ENCODE measurements at regions of chr2 and their contacts with region 1.

Region 1: GRCh38 chr2:84925724-84926376 is 20.4 kb downstream of the TMSB10 start:
- DNase-seq: peak; percentile 94 to 100
- ATAC-seq: peak; percentile 88 to 89
- H3K4me3 ChIP-seq: peak overlapping the region; percentile 64
- H3K27ac ChIP-seq: peak overlapping the region; percentile 91 to 93
- H3K4me1 ChIP-seq: peaks cover 29% of the 10 kb centered on the region
- CTCF ChIP-seq: peak; percentile 100
- EP300 ChIP-seq: no peak
- POLR2A ChIP-seq: peak; percentile 42
- RAD21 ChIP-seq: peak; percentile 92 to 99

Region 2: DNA sequence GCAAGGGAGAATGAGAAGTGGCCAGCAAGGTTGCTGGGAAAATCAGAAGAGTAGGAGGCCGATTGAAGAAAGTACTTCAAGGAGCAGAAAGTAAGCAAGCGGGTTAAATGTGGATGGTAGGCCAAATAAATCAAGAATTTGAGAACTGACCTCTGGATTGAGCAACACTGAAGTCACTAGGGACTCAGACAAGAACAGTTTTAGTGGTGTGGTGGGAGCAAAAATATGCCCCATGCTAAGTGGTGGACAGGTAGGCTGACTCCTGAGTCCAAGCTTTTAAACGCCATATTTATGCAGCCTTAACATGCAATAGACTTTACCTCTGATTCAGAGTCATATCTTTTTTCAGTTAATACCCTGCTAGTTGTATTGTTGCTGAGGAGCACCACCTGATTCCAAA is 49.5 kb before region 1 on chr2:
- CTCF ChIA-PET with region 1: interaction called, 26 read pairs
- POLR2A ChIA-PET with region 1: interaction called, 10 read pairs
- DNase-seq: no peak
- ATAC-seq: no peak
- H3K4me3 ChIP-seq: no peak overlapping the region
- H3K27ac ChIP-seq: no peak overlapping the region
- H3K4me1 ChIP-seq: no peaks in the 10 kb centered on the region
- CTCF ChIP-seq: no peak
- EP300 ChIP-seq: no peak
- POLR2A ChIP-seq: no peak
- RAD21 ChIP-seq: no peak

Region 3: GRCh38 chr2:84894758-84895520 is 30.9 kb before region 1 on chr2:
- CTCF ChIA-PET with region 1: interaction called, 178 read pairs
- POLR2A ChIA-PET with region 1: interaction called, 5 read pairs
- DNase-seq: no peak
- ATAC-seq: peak in 1 of 2 experiments; percentile 14; a peak in 2 of 6 replicates
- H3K4me3 ChIP-seq: no peak overlapping the region
- H3K27ac ChIP-seq: peak overlapping the region in 1 of 2 experiments; percentile 38; a peak in 3 of 6 replicates
- H3K4me1 ChIP-seq: peaks cover 20% of the 10 kb centered on the region
- CTCF ChIP-seq: no peak
- EP300 ChIP-seq: no peak
- POLR2A ChIP-seq: no peak
- RAD21 ChIP-seq: no peak

Region 4: DNA sequence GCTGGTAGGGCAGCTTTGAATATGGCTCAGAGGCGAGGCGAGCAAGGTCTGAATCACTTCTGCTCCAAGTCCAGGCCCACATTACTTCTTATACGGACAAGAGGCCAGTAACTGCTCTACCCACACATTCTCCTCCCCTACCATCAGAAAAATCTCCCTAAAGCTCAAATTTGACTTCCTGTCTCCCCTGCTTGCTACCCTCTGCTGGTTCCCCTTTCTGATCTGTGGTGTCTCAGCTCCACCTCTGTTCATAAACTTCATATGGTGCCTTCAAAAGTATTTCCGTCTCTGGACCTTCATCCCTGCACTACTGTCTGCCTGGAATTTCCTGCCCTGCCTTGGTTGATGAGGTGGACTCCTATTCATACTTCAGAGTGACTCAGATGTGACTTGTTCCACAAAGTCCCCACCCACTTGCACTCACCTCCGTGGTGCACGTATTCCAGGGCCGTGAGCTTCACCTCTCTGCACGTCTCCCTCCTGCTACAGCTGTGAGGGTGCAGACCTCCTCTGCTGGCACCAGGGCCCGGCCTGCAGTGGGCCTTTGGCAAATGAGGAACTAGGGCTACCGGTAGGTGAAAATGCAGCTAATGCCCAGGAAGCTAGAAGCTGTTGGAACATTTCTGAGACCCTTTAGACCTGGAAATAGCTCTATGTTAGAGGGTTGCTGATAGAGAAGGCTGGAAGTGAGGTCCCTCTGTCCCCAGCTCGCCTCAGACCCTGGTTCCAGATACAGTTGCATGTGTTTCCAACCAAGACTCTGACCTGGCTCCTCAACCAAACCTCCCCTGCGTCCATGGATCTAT is 20.6 kb after region 1 on chr2:
- CTCF ChIA-PET with region 1: interaction called, 260 read pairs
- POLR2A ChIA-PET with region 1: interaction called, 14 read pairs
- DNase-seq: peak; percentile 94 to 95
- ATAC-seq: peak; percentile 93 to 94
- H3K4me3 ChIP-seq: no peak overlapping the region
- H3K27ac ChIP-seq: peak overlapping the region; percentile 84 to 88
- H3K4me1 ChIP-seq: peaks cover 26% of the 10 kb centered on the region
- CTCF ChIP-seq: no peak
- EP300 ChIP-seq: no peak
- POLR2A ChIP-seq: peak; percentile 27
- RAD21 ChIP-seq: peak in 1 of 2 experiments; percentile 1; a peak in 1 of 5 replicates

Region 5: GRCh38 chr2:84991404-84992151 is 65.7 kb after region 1 on chr2:
- CTCF ChIA-PET with region 1: interaction called, 12 read pairs
- POLR2A ChIA-PET with region 1: no interaction called
- DNase-seq: peak in 1 of 2 experiments; percentile 42
- ATAC-seq: peak; percentile 48 to 70; a peak in 5 of 6 replicates
- H3K4me3 ChIP-seq: no peak overlapping the region
- H3K27ac ChIP-seq: peak overlapping the region in 1 of 2 experiments; percentile 10; a peak in 2 of 6 replicates
- H3K4me1 ChIP-seq: peaks cover 51% of the 10 kb centered on the region
- CTCF ChIP-seq: no peak
- EP300 ChIP-seq: no peak
- POLR2A ChIP-seq: no peak
- RAD21 ChIP-seq: no peak

Region 6: DNA sequence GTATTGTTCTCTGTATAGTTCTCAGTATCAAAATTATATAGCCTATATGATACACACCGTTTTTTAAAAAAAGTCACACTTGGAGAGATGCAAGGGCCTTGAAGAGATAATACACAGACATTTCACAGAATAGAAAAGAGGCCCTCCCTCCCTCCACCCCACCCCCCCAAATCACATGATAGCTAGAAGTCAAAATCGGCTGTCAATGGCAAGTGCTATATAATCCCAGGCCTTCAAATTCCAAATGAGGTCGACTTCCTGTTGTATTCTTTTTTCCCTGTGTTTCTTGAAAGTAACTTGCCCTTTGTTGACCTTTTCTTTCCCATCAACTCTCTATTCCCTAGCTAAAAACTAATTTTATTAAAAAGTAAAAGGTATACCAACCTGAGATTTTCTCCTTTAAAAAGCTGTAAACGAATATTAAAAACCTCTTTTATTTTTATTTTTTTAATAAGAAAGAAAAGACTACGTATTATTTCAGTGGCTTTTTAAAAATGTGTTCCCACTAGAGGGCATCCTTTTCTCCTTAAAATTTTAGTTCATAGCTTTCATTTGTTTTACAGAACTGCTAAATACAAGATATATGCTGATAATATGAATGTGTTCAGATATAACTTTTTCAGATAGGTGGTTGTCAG is 91.7 kb after region 1 on chr2:
- CTCF ChIA-PET with region 1: interaction called, 59 read pairs
- POLR2A ChIA-PET with region 1: interaction called, 7 read pairs
- DNase-seq: no peak
- ATAC-seq: no peak
- H3K4me3 ChIP-seq: no peak overlapping the region
- H3K27ac ChIP-seq: peak overlapping the region; percentile 50 to 60; a peak in 4 of 6 replicates
- H3K4me1 ChIP-seq: peaks cover 69% of the 10 kb centered on the region
- CTCF ChIP-seq: peak; percentile 65
- EP300 ChIP-seq: no peak
- POLR2A ChIP-seq: no peak
- RAD21 ChIP-seq: peak; percentile 27 to 37; a peak in 2 of 5 replicates

Region 7: DNA sequence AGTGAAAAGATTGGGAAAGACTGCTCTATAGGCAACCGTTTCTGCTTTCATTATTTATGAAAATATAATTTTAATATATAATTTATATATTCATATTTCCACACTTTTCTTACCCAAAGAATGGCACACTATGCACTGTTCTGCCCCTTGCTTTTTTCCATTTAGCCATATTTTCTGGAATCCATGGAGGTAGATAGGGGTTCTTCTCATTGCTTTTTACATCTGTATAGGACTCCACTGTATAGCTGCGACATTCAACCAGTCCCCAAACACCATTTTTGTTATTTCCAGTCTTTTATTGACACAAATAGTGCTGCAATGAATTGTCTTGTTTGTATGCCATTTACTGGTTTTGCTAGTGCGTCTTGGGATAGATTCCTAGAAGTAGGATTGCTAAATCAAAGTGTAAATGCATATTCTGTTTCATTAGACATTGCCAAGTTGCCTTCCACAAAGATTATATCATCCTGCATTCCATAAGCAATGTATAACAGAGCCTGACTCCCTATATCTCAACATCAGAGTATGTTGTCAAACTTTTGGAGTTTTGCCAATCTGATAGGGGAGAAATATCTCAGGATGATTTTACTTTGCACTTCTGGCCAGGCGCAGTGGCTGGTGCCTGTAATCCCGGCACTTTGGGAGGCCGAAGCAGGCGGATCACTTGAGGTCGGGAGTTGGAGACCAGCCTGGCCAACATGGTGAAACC is 180.8 kb after region 1 on chr2:
- CTCF ChIA-PET with region 1: no interaction called
- POLR2A ChIA-PET with region 1: no interaction called
- DNase-seq: peak in 1 of 2 experiments; percentile 18
- ATAC-seq: peak in 1 of 2 experiments; percentile 53; a peak in 3 of 6 replicates
- H3K4me3 ChIP-seq: no peak overlapping the region
- H3K27ac ChIP-seq: no peak overlapping the region
- H3K4me1 ChIP-seq: peaks cover 5% of the 10 kb centered on the region; the same call in 1 of the 3 replicates
- CTCF ChIP-seq: no peak
- EP300 ChIP-seq: no peak
- POLR2A ChIP-seq: no peak
- RAD21 ChIP-seq: no peak

Region 8: GRCh38 chr2:85282914-85283313 is 357.1 kb after region 1 on chr2:
- CTCF ChIA-PET with region 1: interaction called, 14 read pairs
- POLR2A ChIA-PET with region 1: interaction called, 5 read pairs
- DNase-seq: no peak
- ATAC-seq: no peak
- H3K4me3 ChIP-seq: no peak overlapping the region
- H3K27ac ChIP-seq: no peak overlapping the region
- H3K4me1 ChIP-seq: peaks cover 15% of the 10 kb centered on the region
- CTCF ChIP-seq: no peak
- EP300 ChIP-seq: no peak
- POLR2A ChIP-seq: no peak
- RAD21 ChIP-seq: no peak

Measured in A549 (cell line).